ENCODE measurements at regions of chr6 and their contacts with region 1.

Region 1: GRCh38 chr6:161273752-161274487 is at the start of gene AGPAT4:
- DNase-seq: peak; percentile 90
- H3K4me3 ChIP-seq: peak within 1 kb of the TSS; percentile 55 to 77 (median 64)
- H3K27ac ChIP-seq: peak within 1 kb of the TSS; percentile 74 to 83 (median 78)
- H3K4me1 ChIP-seq: peaks cover 0 to 28% (median 20%) of the 10 kb centered on the region in 4 donors
- H3K27me3 ChIP-seq: no peaks in the 10 kb centered on the region
- CTCF ChIP-seq: no peak
- EP300 ChIP-seq: peak in 2 of 4 donors; percentile 15 to 24
- POLR2A ChIP-seq: peak; percentile 19 to 20
- total RNA-seq, gene AGPAT4: 6.9 to 16.6 (median 7.5) TPM

Region 2: DNA sequence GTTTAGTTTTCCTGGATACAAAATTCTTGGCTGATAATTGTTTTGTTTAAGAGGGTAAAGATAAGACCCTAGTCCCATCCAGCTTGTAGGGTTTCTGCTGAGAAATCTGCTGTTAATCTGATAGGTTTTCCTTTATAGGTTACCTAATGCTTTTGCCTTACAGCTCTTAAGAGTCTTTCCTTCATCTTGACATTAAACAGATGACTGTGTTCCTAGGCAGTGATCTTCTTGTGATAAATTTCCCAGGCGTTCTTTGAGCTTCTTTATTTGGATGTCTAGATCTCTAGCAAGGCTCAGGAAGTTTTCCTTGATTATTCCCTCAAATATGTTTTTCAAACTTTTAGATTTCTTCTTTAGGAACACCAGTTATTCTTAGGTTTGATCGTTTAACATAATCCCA is 148.3 kb before region 1 on chr6:
- intact Hi-C with region 1: no loop called
- DNase-seq: no peak
- H3K4me3 ChIP-seq: no peak overlapping the region
- H3K27ac ChIP-seq: peak overlapping the region in 2 of 4 donors; percentile 48 to 49
- H3K4me1 ChIP-seq: no peaks in the 10 kb centered on the region
- H3K27me3 ChIP-seq: no peaks in the 10 kb centered on the region
- CTCF ChIP-seq: no peak
- EP300 ChIP-seq: no peak
- POLR2A ChIP-seq: no peak

Region 3: DNA sequence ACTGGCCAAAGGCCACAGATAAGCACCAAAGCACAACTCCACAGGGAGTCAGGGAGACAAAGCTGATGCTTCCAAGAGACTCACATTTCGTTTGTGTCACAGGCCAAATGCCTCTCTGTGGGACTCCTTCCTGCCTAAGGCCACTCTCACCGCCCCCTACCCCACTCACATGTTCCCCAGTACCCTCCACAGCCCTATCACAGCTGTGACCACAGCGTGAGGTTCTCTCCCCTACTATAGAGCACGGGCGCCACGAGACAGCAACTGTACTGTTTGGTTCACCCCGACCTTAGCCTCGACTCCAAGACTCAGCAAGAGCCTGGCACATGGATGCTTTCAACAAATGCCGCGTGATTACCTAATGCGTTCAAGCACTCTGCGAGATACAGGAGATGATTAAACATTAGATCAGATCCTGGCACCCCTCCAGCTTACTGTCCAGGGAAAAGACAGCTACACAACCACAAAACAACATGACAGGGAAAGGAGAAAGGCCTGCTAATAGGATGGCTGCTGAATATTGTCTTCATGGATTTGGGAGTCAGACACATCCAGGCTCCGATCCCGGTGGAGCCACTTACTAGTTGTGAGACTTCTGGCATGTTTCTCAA is 105.5 kb before region 1 on chr6:
- intact Hi-C with region 1: loop called (anchors 5 kb)
- DNase-seq: no peak
- H3K4me3 ChIP-seq: no peak overlapping the region
- H3K27ac ChIP-seq: peak overlapping the region in 1 of 4 donors; percentile 40
- H3K4me1 ChIP-seq: peaks cover 0 to 23% (median 18%) of the 10 kb centered on the region in 4 donors
- H3K27me3 ChIP-seq: no peaks in the 10 kb centered on the region
- CTCF ChIP-seq: no peak
- EP300 ChIP-seq: no peak
- POLR2A ChIP-seq: no peak

Region 4: GRCh38 chr6:161228921-161229591 is 44.9 kb before region 1 on chr6:
- intact Hi-C with region 1: loop called (anchors 2 kb)
- DNase-seq: no peak
- H3K4me3 ChIP-seq: peak overlapping the region in 3 of 4 donors; percentile 7 to 25 (median 19)
- H3K27ac ChIP-seq: peak overlapping the region; percentile 68 to 83 (median 78)
- H3K4me1 ChIP-seq: peaks cover 0 to 51% (median 45%) of the 10 kb centered on the region in 4 donors
- H3K27me3 ChIP-seq: no peaks in the 10 kb centered on the region
- CTCF ChIP-seq: no peak
- EP300 ChIP-seq: no peak
- POLR2A ChIP-seq: no peak

Region 5: DNA sequence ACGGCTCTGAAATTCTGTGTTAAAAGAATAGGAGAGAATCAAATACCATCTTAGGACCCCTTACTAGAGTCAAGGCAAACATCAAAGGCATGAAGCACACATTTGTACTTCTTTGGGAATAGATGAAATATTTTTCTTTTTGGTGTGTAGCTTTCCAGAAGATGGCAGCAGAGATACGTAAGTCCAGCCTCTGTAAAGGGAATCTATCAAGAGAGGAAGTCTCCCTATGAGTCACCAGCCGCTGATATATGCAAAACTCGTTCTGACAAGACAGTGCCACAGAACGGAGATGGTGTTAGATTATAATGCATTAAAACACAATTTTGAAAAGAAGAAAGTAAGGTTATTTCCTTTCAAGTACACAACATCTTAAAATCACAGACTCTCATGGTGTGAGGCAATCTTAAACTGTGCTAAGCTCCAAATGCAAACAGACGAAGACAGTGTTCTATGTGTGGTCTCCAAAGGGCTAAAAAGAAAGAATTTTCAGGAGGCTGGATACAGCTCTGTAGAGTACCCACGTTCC is 120.0 kb after region 1 on chr6:
- intact Hi-C with region 1: no loop called
- DNase-seq: no peak
- H3K4me3 ChIP-seq: no peak overlapping the region
- H3K27ac ChIP-seq: no peak overlapping the region
- H3K4me1 ChIP-seq: peaks cover 0 to 4% (median 1%) of the 10 kb centered on the region in 4 donors
- H3K27me3 ChIP-seq: no peaks in the 10 kb centered on the region
- CTCF ChIP-seq: peak; percentile 31 to 62 (median 50)
- EP300 ChIP-seq: no peak
- POLR2A ChIP-seq: no peak